PC-9 (cell line): ENCODE measurements at regions of chr3 and their contacts with region 1.

Region 1: DNA sequence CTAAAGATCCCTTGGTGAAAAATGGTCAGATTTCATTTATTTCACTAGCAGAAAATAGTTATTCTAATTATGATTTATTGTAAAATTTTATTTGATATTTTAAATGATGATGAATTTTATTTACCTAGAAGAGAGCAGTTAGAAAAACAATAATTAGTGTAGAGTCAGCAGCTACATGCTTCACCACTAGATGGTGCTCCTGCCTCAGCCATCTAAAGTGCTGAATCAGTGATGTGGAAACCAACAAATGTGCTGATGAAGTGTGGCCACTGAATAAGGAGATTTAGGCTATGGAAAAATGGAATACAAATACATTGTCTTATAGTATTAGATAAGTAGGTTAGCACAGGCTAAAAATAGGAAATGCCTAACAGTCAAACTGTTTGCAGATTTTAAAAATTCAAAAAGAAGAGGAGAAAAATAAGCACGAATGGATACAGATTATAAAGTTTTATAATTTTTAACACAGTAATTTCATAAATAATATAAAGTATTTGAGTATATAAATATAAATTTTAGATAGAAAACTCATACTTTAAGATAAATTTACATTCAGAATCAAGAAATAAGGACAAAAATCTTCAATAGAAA is 109.8 kb downstream of the PPP2R3A start:
- DNase-seq: peak; percentile 38 to 58
- H3K4me3 ChIP-seq: no peak overlapping the region
- H3K27ac ChIP-seq: no peak overlapping the region
- H3K4me1 ChIP-seq: no peaks in the 10 kb centered on the region
- H3K27me3 ChIP-seq: no peaks in the 10 kb centered on the region
- CTCF ChIP-seq: peak; percentile 95

Region 2: DNA sequence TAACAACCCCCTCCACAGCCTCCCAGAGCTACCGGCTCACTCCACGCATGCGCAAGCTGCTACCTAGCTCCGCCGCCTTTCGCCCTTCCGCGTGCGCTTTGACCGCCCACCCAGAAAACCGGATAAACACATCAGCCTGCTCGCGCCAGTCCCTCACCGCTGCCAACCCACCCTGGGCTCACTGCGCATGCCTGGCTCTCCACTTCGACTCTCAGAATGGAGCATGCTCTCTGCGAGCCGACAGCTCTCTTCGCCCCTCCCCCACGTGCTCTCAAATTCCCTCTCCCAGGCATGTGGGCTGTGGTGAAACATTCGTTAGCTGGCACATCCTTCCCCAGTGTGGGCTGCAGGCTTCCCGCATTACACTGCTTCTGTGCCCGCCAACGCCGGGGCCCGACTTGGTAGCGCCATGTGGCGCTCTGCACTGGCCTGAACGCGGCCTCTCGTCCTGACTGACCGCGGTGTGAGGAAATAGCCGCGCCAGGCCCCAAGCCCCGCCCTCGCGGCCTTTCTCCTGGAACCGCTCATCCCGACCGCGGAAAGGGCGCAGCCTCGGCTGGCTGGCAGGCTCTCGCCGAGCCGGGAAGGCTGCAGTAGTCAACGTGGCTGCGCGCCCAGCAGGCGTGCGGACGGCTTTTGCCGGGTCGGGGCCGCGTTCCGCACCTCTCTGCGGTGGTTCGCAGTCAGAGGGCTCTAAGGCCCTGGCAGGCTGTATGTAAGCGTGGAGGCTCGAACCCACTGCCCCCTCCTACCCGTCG is 121.3 kb after region 1 on chr3:
- CTCF ChIA-PET with region 1: no interaction called
- POLR2A ChIA-PET with region 1: no interaction called
- intact Hi-C with region 1: loop called (anchors 5 kb)
- DNase-seq: peak; percentile 97 to 100
- H3K4me3 ChIP-seq: peak overlapping the region; percentile 84
- H3K27ac ChIP-seq: peak overlapping the region; percentile 95
- H3K4me1 ChIP-seq: peaks cover 30% of the 10 kb centered on the region
- H3K27me3 ChIP-seq: no peaks in the 10 kb centered on the region
- CTCF ChIP-seq: no peak

Region 3: DNA sequence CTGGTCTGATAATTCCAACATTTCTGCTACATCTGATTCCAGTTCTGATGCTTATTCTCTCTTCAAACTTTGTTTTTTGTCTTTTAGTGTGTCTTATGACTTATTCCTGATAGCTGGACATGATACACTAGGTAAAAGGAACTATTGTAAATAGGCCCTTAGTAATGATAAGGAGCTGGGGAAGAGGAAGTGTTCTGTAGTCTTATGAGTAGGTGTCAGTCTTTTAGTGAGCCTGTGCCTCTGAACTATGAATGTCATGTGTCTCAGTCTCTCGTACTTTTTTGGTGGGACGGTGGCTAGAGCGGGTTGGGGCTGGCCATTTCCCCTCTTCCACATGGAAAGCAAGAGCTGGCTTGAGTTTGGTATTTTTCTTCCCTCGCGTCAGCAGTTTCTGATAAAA is 216.0 kb after region 1 on chr3:
- CTCF ChIA-PET with region 1: no interaction called
- POLR2A ChIA-PET with region 1: no interaction called
- intact Hi-C with region 1: loop called (anchors 5 kb)
- DNase-seq: no peak
- H3K4me3 ChIP-seq: no peak overlapping the region
- H3K27ac ChIP-seq: no peak overlapping the region
- H3K4me1 ChIP-seq: no peaks in the 10 kb centered on the region
- H3K27me3 ChIP-seq: no peaks in the 10 kb centered on the region
- CTCF ChIP-seq: no peak

Region 4: DNA sequence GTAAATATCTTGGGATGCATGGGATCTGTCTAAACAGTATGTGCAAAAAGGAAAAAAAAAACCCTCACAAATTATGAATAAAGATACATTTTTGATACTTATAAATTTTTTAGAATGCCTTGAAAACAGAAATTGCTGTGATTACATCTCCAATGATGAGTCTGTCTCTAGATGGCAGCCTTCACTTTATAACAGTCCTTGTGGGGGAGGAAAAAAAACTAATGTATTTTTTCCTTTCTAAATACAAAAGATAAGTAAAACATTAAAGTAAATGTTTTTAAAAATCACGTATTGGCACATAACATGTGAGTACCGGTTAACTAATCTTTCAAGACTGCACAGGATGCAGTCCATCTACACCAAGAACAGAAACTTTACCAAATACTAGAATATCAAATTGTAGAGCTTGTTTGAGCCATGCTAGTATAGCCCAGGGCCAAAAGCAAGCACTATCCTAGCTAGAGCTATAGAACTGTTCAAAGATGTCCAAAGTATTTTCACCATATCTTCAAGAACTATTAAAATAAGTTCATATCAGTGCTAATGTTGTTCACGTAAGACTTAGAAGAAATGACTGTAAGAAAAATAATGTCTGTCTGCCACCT is 470.5 kb after region 1 on chr3:
- CTCF ChIA-PET with region 1: no interaction called
- POLR2A ChIA-PET with region 1: no interaction called
- intact Hi-C with region 1: loop called (anchors 10 kb)
- DNase-seq: no peak
- H3K4me3 ChIP-seq: no peak overlapping the region
- H3K27ac ChIP-seq: no peak overlapping the region
- H3K4me1 ChIP-seq: 0 out of 2 replicates have a peak, but pooled peaks cover 4% of the 10 kb centered on the region
- H3K27me3 ChIP-seq: no peaks in the 10 kb centered on the region
- CTCF ChIP-seq: peak; percentile 40; the same call in 1 of the 2 replicates

Region 5: GRCh38 chr3:137032465-137033120 is 957.3 kb after region 1 on chr3:
- CTCF ChIA-PET with region 1: no interaction called
- POLR2A ChIA-PET with region 1: no interaction called
- intact Hi-C with region 1: loop called (anchors 5 kb)
- DNase-seq: peak in 1 of 2 experiments; percentile 80
- H3K4me3 ChIP-seq: no peak overlapping the region
- H3K27ac ChIP-seq: no peak overlapping the region
- H3K4me1 ChIP-seq: no peaks in the 10 kb centered on the region
- H3K27me3 ChIP-seq: no peaks in the 10 kb centered on the region
- CTCF ChIP-seq: peak; percentile 93